Activated CD8-positive, alpha-beta memory T cell treated with anti-CD3 and anti-CD28 coated beads, Interleukin-2, amount 10 ng/mL, durations not matched to agents 7 days and 5 days (primary cell): ENCODE measurements at regions of chr17 and their contacts with region 1.

Region 1: DNA sequence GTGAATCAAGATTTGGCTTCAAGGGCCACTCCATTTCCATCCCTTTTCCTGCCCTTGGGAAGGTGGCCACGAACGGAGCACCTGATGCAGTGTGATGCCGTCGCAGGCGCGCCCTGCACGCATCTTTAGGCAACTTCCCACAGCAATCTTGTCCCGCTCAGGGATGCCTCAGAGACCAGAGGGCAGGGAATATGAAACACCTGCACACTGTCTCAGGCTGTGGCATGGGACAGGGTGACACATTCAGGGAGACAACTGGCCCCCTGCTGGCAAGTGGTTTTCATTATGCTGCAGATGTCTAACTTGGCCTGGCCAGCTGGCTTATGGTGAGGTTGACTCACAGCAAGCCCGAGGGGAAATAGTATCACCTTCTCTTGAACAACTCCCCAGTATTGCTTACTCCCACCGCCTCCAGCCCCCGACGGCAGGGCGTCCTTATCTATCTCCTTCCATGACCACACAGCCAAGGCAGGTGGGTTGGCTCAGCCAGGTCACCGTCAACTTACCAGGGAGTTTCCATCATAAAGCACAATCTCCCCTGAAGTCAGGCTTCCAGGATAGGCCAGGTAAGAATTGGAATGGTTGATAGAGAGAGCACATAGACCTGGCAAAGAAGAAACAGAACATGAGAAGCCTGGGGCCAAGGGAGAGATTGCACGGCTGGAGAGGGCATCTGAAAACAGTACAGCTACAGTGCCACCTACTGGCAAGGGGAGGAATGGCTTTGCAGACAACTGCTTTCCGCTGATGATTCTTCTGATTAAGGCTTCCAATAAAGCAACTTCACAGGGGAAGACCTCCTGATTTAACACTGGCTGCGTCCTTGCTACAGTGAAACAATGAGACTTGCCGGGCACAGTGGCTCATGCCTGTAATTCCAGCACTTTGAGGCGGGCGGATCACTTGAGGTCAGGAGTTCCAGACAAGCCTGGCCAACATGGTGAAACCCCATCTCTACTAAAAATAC is 21.1 kb downstream of the WIPI1 start:
- DNase-seq: peak; percentile 91
- ATAC-seq: peak; percentile 73
- H3K4me3 Mint-ChIP-seq: peak overlapping the region; percentile 26
- H3K27ac Mint-ChIP-seq: peak overlapping the region; percentile 98
- H3K4me1 Mint-ChIP-seq: peaks cover 50% of the 10 kb centered on the region
- H3K27me3 Mint-ChIP-seq: no peaks in the 10 kb centered on the region

Region 2: DNA sequence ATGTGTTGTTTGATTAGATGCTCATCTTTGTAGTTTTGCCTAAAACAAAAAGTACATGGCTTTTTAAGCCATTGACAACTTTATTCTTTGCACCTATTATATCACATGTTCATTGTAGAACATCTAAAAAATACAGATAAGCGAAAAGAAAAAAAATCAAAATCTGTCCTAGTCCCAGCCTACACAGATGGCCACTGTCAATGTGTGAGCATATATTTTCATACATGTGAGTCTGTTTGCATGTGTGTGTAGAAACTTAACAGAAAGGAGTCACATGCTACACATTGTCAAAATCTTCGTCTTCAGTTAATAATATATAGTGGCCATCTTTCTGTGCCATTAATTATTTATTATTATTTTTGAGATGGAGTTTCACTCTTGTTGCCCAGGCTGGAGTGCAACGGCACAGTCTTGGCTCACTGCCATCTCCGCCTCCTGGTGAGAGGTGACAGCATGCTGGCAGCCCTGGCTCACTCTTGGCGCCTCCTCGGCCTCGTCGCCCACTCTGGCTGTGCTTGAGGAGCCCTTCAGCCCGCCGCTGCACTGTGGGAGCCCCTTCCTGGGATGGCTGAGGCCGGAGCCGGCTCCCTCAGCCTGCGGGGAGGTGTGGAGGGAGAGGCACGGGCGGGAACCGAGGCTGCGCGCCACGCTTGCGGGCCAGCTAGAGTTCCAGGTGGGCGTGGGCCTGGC is 256.8 kb before region 1 on chr17:
- CTCF ChIA-PET with region 1: interaction called, 15 read pairs
- DNase-seq: no peak
- ATAC-seq: no peak
- H3K4me3 Mint-ChIP-seq: no peak overlapping the region
- H3K27ac Mint-ChIP-seq: no peak overlapping the region
- H3K4me1 Mint-ChIP-seq: peaks cover 47% of the 10 kb centered on the region
- H3K27me3 Mint-ChIP-seq: no peaks in the 10 kb centered on the region

Region 3: GRCh38 chr17:68255731-68256538 is 180.2 kb before region 1 on chr17:
- CTCF ChIA-PET with region 1: interaction called, 119 read pairs
- DNase-seq: no peak
- ATAC-seq: peak; percentile 14
- H3K4me3 Mint-ChIP-seq: peak overlapping the region; percentile 17
- H3K27ac Mint-ChIP-seq: peak overlapping the region; percentile 88
- H3K4me1 Mint-ChIP-seq: peaks cover 82% of the 10 kb centered on the region
- H3K27me3 Mint-ChIP-seq: no peaks in the 10 kb centered on the region

Region 4: GRCh38 chr17:68346448-68346847 is 89.7 kb before region 1 on chr17:
- CTCF ChIA-PET with region 1: interaction called, 12 read pairs
- DNase-seq: peak; percentile 93
- ATAC-seq: peak; percentile 69
- H3K4me3 Mint-ChIP-seq: peak overlapping the region; percentile 61
- H3K27ac Mint-ChIP-seq: peak overlapping the region; percentile 99
- H3K4me1 Mint-ChIP-seq: peaks cover 80% of the 10 kb centered on the region
- H3K27me3 Mint-ChIP-seq: no peaks in the 10 kb centered on the region

Region 5: DNA sequence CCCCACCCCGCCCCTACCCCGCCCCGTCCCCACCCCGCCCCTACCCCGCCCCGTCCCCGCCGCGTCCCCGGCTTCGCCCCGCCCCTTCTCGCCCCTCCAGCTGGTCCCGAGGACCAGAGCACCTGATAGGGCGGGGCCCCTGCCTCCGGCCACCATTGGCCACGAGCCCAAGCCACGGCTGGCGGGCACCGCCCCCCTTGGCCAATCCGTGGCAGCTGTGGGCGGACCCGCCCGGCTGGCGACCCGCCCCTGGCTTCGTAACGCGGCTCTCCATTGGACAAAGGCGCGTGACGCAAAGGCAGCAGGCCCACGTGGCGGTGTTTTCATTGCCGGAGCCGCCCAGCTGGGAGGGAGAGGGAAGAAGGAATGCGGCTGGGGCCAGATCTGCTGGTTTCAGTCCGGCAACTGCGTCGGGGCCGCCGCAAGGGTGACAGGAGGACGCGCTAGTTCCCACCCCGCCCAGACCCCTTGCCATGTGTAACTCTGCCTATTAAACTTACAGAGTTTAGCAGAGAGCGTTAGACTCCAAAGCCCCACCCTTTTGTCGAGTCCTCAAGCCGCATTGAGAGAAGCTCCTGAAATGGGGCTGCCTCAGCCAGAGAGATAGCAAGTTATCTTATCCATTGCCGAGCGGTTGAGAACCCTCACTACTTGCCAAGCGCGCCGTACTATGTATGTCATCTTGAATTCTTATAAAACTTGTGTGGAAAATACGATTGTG is 21.5 kb after region 1 on chr17:
- CTCF ChIA-PET with region 1: interaction called, 260 read pairs
- DNase-seq: peak; percentile 99
- ATAC-seq: peak; percentile 94
- H3K4me3 Mint-ChIP-seq: peak overlapping the region; percentile 75
- H3K27ac Mint-ChIP-seq: peak overlapping the region; percentile 94
- H3K4me1 Mint-ChIP-seq: peaks cover 81% of the 10 kb centered on the region
- H3K27me3 Mint-ChIP-seq: no peaks in the 10 kb centered on the region